Endothelial cell of umbilical vein (primary cell): ENCODE measurements at regions of chr6 and their contacts with region 1.

Region 1: GRCh38 chr6:155143029-155143577 is 120.7 kb upstream of the CLDN20 start:
- DNase-seq: no peak
- H3K4me3 ChIP-seq: peak overlapping the region in 2 of 3 experiments; percentile 15 to 62
- H3K27ac ChIP-seq: peak overlapping the region; percentile 79
- H3K4me1 ChIP-seq: peaks cover 37% of the 10 kb centered on the region
- H3K27me3 ChIP-seq: no peaks in the 10 kb centered on the region
- CTCF ChIP-seq: no peak
- POLR2A ChIP-seq: no peak

Region 2: DNA sequence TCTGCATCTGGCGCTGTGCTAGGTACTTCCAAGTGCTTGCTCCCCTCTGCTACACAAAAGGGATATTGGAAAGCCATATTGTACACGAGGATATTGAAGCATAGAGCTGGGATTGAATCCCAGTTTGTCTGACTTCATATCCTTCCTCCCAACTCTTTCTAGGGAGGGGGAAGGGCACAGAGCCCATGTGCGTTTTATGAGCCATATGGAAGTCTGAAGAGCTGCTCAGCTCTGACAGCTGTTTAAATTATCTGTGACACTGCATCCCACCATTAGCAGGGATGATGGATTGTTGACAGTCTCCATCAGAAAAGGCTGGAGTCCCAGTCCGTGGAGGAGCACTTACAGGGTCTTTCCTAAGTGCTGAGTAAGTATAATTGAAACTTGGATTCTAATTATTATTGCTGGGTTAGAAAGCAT is 129.6 kb before region 1 on chr6:
- CTCF ChIA-PET with region 1: no interaction called
- POLR2A ChIA-PET with region 1: no interaction called
- dilution Hi-C with region 1: no loop called
- intact Hi-C with region 1: loop called (anchors 5 kb)
- DNase-seq: peak; percentile 89
- H3K4me3 ChIP-seq: peak overlapping the region in 2 of 3 experiments; percentile 39 to 65
- H3K27ac ChIP-seq: peak overlapping the region; percentile 41
- H3K4me1 ChIP-seq: peaks cover 25% of the 10 kb centered on the region
- H3K27me3 ChIP-seq: no peaks in the 10 kb centered on the region
- CTCF ChIP-seq: no peak
- POLR2A ChIP-seq: no peak

Region 3: DNA sequence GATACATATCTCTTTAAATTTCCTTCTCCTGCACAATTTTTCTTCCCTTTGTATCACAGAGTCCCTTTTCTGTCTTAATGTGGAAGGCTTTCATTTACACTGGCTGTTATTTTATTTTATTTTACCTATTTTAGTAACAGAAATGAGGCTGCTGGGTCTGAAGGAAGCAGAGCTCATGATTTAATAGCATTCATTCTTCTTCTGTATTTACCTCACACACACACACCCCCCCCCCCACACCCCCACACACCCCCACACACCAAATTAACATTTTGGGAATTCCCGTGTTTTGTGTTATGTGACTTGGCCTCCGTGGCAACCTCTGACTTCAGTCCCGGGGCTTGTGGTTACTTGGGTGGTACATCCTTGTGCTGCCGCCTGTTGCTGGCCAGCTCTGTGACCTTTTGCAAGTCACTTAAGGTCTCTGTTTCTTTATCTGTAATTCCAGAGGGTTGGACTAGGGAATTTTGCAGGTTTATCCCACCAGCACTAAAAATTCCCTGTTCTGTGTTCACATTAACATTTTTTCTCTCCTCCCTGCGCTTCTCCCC is 39.2 kb before region 1 on chr6:
- CTCF ChIA-PET with region 1: no interaction called
- POLR2A ChIA-PET with region 1: no interaction called
- dilution Hi-C with region 1: no loop called
- intact Hi-C with region 1: loop called (anchors 1 kb)
- DNase-seq: no peak
- H3K4me3 ChIP-seq: no peak overlapping the region
- H3K27ac ChIP-seq: no peak overlapping the region
- H3K4me1 ChIP-seq: peaks cover 19% of the 10 kb centered on the region
- H3K27me3 ChIP-seq: no peaks in the 10 kb centered on the region
- CTCF ChIP-seq: no peak
- POLR2A ChIP-seq: no peak

Region 4: GRCh38 chr6:155126727-155127439 is 16.2 kb before region 1 on chr6:
- CTCF ChIA-PET with region 1: interaction called, 5 read pairs
- POLR2A ChIA-PET with region 1: no interaction called
- dilution Hi-C with region 1: no loop called
- intact Hi-C with region 1: loop called (anchors 1 kb)
- DNase-seq: peak; percentile 78
- H3K4me3 ChIP-seq: no peak overlapping the region
- H3K27ac ChIP-seq: peak overlapping the region; percentile 74
- H3K4me1 ChIP-seq: peaks cover 10% of the 10 kb centered on the region
- H3K27me3 ChIP-seq: no peaks in the 10 kb centered on the region
- CTCF ChIP-seq: no peak
- POLR2A ChIP-seq: no peak

Region 5: GRCh38 chr6:155154158-155154830 is 11.2 kb after region 1 on chr6:
- CTCF ChIA-PET with region 1: interaction called, 5 read pairs
- POLR2A ChIA-PET with region 1: interaction called, 3 read pairs
- dilution Hi-C with region 1: no loop called
- intact Hi-C with region 1: loop called (anchors 2 kb)
- DNase-seq: peak; percentile 68
- H3K4me3 ChIP-seq: no peak overlapping the region
- H3K27ac ChIP-seq: peak overlapping the region; percentile 50
- H3K4me1 ChIP-seq: peaks cover 28% of the 10 kb centered on the region
- H3K27me3 ChIP-seq: no peaks in the 10 kb centered on the region
- CTCF ChIP-seq: no peak
- POLR2A ChIP-seq: no peak